AG04450 (cell line): ENCODE measurements at regions of chr20 and their contacts with region 1.

Region 1: DNA sequence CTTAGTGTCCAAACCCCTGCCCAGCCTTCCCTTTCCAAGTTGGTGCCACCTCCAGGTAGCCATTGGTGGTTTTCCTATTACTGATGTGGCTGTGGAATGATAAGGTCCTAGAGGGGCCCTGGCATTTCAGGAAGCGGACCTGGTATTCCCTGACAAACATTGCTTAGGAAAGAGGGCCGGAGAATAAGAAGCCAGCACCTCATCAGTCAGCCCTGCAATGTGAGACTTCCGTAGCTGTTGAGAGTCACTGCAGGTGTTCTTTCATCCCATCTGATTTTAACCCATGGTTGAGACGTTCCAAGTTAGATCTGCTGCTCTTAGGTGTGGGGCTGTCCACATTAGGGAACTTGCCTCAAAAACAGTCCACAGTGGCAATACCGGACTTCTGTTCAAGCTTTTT is 14.8 kb upstream of the NPEPL1 start:
- DNase-seq: no peak
- H3K4me3 ChIP-seq: no peak overlapping the region
- H3K27ac ChIP-seq: no peak overlapping the region
- H3K27me3 ChIP-seq: no peaks in the 10 kb centered on the region
- CTCF ChIP-seq: no peak

Region 2: DNA sequence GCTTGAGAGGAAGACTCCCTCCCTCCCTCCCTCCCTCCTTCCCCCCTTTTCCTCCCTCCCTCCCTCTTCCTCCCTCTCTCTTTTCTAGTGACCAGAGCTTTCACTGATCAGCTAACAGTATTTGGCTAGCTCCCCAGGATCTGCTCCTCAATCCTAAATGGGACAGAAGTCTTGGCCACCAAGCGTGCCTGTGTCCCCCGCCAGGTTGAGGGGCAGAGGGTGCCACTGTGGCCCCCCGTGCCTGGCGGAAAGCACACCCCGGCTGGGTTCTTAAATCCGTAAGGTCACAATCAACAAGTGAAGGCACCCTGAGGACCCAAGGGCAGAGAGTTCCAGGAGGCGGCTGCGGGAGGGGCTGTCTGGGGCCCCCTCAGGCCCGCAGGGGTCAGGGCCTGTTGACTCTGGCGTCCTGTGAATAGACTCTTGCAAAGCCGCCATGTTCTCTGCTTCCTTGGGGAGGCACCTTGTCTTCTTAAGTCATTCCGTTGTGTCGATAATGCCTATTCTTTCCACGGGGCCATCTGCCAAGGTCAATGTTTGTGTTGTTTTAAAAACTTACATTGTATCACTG is 65.6 kb before region 1 on chr20:
- CTCF ChIA-PET with region 1: no interaction called
- POLR2A ChIA-PET with region 1: no interaction called
- DNase-seq: no peak
- H3K4me3 ChIP-seq: no peak overlapping the region
- H3K27ac ChIP-seq: no peak overlapping the region
- H3K27me3 ChIP-seq: no peaks in the 10 kb centered on the region
- CTCF ChIP-seq: no peak

Region 3: GRCh38 chr20:58760856-58761255 is 83.0 kb after region 1 on chr20:
- CTCF ChIA-PET with region 1: no interaction called
- POLR2A ChIA-PET with region 1: interaction called, 10 read pairs
- DNase-seq: no peak
- H3K4me3 ChIP-seq: no peak overlapping the region
- H3K27ac ChIP-seq: no peak overlapping the region
- H3K27me3 ChIP-seq: peaks cover 10% of the 10 kb centered on the region
- CTCF ChIP-seq: no peak